ENCODE measurements at regions of chr5 and their contacts with region 1.

Region 1: DNA sequence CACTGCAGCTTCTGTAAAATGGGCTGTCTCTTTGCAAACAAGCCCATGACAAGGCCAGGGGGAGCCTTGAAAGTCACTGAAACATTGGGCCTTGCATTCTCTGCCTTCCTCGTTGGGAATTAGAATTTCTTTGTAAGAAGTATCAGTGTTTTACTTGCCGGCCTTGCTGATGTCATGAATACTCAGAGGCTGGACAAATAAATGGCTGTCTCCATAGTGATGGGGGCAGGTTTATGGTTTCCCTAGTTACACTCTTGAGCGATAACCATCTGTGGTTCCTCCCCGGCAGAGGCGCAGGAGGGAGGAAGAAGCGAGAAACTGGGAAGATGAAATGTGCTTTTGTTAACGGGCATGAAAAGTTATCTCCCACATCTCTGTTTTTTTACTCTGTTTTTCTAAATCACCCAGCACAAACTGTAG is 272.7 kb upstream of the PANK3 start:
- DNase-seq: peak; percentile 63
- ATAC-seq: peak; percentile 59
- H3K4me3 Mint-ChIP-seq: peak overlapping the region; percentile 59
- H3K27ac Mint-ChIP-seq: peak overlapping the region; percentile 84
- H3K4me1 Mint-ChIP-seq: peaks cover 43% of the 10 kb centered on the region
- H3K27me3 Mint-ChIP-seq: peaks cover 2% of the 10 kb centered on the region

Region 2: GRCh38 chr5:168793841-168794837 is 57.8 kb before region 1 on chr5:
- CTCF ChIA-PET with region 1: no interaction called
- POLR2A ChIA-PET with region 1: no interaction called
- intact Hi-C with region 1: loop called (anchors 5 kb)
- DNase-seq: peak; percentile 81
- ATAC-seq: peak; percentile 77
- H3K4me3 Mint-ChIP-seq: no peak overlapping the region
- H3K27ac Mint-ChIP-seq: peak overlapping the region; percentile 90
- H3K4me1 Mint-ChIP-seq: peaks cover 58% of the 10 kb centered on the region
- H3K27me3 Mint-ChIP-seq: no peaks in the 10 kb centered on the region

Region 3: DNA sequence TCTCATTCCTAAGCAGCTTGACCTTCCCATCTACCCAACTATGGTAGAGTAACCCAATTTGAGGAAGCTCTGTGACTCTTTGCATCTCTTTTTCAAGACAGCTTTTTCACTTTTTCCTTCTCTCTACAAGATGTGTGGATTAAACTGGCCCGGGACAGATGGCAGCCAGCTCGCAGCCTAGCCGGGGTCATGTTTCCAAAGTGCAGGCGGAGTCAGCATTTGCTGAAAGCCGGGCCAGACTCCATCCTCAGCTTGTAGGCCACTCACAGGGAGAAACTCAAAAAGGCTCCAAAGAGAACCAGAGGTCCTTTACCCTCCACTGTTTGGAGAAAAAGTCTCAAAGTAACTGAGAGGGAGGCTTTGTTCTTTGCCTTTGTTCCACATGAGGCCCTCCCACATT is 14.1 kb after region 1 on chr5:
- CTCF ChIA-PET with region 1: no interaction called
- POLR2A ChIA-PET with region 1: no interaction called
- intact Hi-C with region 1: no loop called
- DNase-seq: no peak
- ATAC-seq: no peak
- H3K4me3 Mint-ChIP-seq: no peak overlapping the region
- H3K27ac Mint-ChIP-seq: no peak overlapping the region
- H3K4me1 Mint-ChIP-seq: peaks cover 3% of the 10 kb centered on the region
- H3K27me3 Mint-ChIP-seq: peaks cover 3% of the 10 kb centered on the region

Region 4: GRCh38 chr5:169050146-169050571 is 198.2 kb after region 1 on chr5:
- CTCF ChIA-PET with region 1: no interaction called
- POLR2A ChIA-PET with region 1: no interaction called
- intact Hi-C with region 1: no loop called
- DNase-seq: no peak
- ATAC-seq: no peak
- H3K4me3 Mint-ChIP-seq: no peak overlapping the region
- H3K27ac Mint-ChIP-seq: no peak overlapping the region
- H3K4me1 Mint-ChIP-seq: no peaks in the 10 kb centered on the region
- H3K27me3 Mint-ChIP-seq: peaks cover 8% of the 10 kb centered on the region

Measured in activated CD4-positive, alpha-beta T cell treated with anti-CD3 and anti-CD28 coated beads for 36 hours (primary cell).